ENCODE measurements at regions of chr17 and their contacts with region 1.

Region 1: GRCh38 chr17:79354173-79354820 is 256.6 kb downstream of the RBFOX3 start:
- DNase-seq: no peak
- H3K4me3 ChIP-seq: no peak overlapping the region
- H3K27ac ChIP-seq: no peak overlapping the region
- H3K4me1 ChIP-seq: no peaks in the 10 kb centered on the region
- H3K27me3 ChIP-seq: peaks cover 0 to 87% (median 13%) of the 10 kb centered on the region in 7 donors
- CTCF ChIP-seq: no peak
- POLR2A ChIP-seq: no peak

Region 2: GRCh38 chr17:79294459-79295071 is 59.7 kb before region 1 on chr17:
- intact Hi-C with region 1: no loop called
- DNase-seq: no peak
- H3K4me3 ChIP-seq: no peak overlapping the region
- H3K27ac ChIP-seq: no peak overlapping the region
- H3K4me1 ChIP-seq: no peaks in the 10 kb centered on the region
- H3K27me3 ChIP-seq: peaks cover 0 to 91% (median 13%) of the 10 kb centered on the region in 7 donors
- CTCF ChIP-seq: no peak
- POLR2A ChIP-seq: no peak

Region 3: DNA sequence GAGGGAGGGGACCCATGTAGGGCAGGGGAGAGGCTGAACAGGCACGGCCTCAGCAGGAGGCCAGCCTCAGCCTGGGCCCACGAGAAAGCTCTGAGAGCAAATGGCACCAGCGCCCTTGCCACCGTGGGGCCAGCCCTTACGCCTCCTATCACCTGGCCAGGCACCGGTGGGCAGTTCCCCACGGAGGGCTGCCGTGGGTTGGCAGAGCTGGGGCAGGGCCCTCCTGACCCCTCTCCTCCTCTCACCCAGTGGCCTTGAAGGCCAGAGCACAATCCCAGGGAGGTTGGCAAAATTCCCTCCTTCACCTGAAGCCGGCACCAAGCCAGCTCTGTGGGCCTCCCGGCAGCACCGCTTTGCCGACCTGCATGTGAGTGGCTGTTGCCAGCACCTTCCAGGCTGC is 323.3 kb after region 1 on chr17:
- intact Hi-C with region 1: loop called (anchors 5 kb)
- DNase-seq: no peak
- H3K4me3 ChIP-seq: no peak overlapping the region
- H3K27ac ChIP-seq: no peak overlapping the region
- H3K4me1 ChIP-seq: no peaks in the 10 kb centered on the region
- H3K27me3 ChIP-seq: peaks cover 0 to 67% (median 10%) of the 10 kb centered on the region in 7 donors
- CTCF ChIP-seq: no peak
- POLR2A ChIP-seq: no peak